Endothelial cell of umbilical vein (primary cell): ENCODE measurements at regions of chr2 and their contacts with region 1.

Region 1: GRCh38 chr2:240913810-240914644 is 7.9 kb downstream of the CROCC2 start:
- DNase-seq: peak; percentile 78
- H3K4me3 ChIP-seq: no peak overlapping the region
- H3K27ac ChIP-seq: peak overlapping the region; percentile 24
- H3K4me1 ChIP-seq: peaks cover 15% of the 10 kb centered on the region
- H3K27me3 ChIP-seq: no peaks in the 10 kb centered on the region
- CTCF ChIP-seq: peak; percentile 95 to 96
- POLR2A ChIP-seq: no peak

Region 2: DNA sequence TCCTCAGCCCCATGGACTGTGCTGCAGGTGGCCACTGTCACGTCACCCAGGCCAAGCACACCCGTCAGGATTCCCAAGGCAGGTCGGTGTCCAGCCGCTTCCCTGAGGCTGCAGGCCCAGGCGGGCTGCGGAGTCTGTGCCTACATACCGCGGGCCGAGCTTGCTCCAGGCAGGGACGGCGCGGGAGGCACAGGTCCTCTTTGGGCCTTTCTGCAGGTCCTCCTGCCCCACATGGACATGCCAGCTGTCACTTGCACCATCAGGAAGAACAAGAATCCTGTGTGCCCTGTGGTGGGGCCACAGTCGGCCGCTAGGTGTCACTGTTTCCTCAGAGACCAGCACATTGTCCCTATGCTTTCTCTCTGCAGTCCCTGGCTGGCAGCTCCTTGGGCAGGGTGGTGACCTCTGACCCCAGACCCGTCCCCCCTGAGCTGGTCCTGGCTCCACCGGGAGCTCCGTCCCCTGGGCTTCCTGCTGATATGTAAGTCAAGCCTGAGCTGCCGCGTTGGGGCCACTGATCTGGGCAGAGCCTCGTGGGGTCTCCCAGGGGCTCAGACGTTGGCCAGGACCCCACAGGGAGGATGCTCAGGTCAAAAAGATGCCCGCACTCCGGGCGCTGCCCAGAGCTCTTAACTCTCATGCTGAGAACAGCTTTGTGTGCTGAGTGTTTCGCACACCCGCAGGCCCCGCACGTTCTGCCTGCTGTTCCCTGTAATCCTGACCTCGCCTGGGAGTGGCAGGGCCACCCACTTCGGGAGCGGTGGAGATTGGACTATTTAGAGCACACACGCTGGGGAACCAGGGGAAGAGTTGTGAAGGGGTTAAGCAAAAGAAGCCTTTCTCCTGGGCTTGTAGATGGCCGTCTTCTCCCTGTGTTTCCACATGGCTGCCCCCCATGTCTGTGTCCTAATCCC is 62.7 kb before region 1 on chr2:
- CTCF ChIA-PET with region 1: interaction called, 11 read pairs
- POLR2A ChIA-PET with region 1: no interaction called
- dilution Hi-C with region 1: no loop called
- intact Hi-C with region 1: loop called (anchors 1 kb)
- DNase-seq: peak; percentile 78
- H3K4me3 ChIP-seq: no peak overlapping the region
- H3K27ac ChIP-seq: no peak overlapping the region
- H3K4me1 ChIP-seq: no peaks in the 10 kb centered on the region
- H3K27me3 ChIP-seq: no peaks in the 10 kb centered on the region
- CTCF ChIP-seq: peak; percentile 92 to 95
- POLR2A ChIP-seq: no peak

Region 3: DNA sequence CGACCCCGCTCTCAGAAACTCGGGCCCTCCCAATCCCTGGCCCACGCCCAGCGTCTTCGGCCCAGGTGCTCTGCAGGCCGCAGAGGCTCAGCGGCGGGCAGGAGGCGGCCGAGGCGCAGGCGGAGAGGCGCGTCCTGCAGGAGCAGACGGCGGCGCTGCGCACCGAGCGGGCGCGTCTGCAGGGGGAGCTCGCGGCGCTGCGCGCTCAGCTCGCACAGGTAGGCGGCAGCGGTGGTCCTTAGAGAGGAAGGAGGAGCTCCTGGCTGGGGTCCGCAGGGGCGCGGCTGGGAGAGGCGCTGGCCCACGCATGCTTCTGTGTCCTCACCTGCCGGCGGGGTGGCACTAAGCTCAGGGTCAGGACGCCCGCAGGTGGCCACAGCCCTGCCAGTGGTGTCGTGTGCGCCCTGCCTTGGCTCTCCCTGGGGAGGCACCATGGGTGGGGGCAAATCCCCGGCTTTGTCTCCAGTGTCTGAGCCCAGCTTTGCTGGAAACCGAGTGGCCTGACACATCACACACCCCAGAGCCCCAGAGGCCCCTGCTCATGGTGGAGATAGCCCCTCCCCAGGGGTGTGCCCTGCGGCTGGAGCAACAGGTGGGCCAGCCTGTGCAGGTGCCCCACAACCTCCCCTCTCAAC is 69.5 kb after region 1 on chr2:
- CTCF ChIA-PET with region 1: interaction called, 32 read pairs
- POLR2A ChIA-PET with region 1: no interaction called
- dilution Hi-C with region 1: no loop called
- intact Hi-C with region 1: loop called (anchors 1 kb)
- DNase-seq: peak; percentile 49
- H3K4me3 ChIP-seq: no peak overlapping the region
- H3K27ac ChIP-seq: no peak overlapping the region
- H3K4me1 ChIP-seq: peaks cover 14% of the 10 kb centered on the region
- H3K27me3 ChIP-seq: peaks cover 7 to 8% of the 10 kb centered on the region in 2 experiments
- CTCF ChIP-seq: peak; percentile 50 to 80
- POLR2A ChIP-seq: no peak

Region 4: DNA sequence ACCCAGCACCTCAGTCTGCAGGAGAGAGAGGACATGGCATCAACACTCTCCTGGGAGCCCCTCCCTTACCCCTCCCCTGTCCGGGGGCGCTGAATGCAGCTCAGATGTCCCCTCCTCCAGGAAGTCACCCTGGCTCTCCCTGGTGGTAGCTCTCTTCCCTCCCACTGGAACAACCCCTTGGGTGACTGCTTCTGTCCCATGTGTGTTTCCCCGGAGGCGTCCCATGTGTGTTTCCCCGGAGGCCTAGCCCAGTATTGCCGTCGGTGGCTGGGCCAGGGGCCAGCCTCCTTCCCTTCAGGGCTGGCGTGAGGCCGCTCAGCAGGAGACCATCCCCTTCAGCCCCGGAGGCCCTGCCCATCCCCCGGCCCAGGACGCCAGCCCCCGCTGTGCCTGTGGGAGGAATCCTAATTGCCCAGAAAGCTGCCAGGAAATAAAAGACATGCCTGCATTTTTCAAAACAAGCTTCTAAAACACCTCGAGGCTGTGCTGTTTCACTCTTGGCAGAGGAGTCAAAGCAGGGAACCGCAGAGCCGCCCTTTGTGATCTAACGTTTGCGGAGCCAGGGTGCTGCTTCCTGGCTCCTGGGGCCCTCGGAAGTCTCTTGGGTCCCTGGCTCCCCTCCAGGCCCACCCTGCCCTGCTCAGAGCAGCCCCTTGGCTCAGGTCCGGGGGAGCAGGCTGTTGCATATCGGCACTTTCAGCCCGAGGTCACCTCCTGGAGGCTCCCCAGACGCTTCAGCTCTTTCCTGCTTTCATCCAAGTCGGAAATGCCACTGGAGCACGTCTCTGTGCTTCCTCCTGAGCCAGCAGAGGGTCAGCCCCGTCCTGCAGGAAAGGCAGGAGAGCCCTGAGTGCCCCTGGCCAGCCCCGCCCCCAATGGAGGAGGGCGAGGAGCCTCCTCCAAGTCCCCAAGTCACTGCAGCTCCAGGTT is 95.8 kb after region 1 on chr2:
- CTCF ChIA-PET with region 1: interaction called, 25 read pairs
- POLR2A ChIA-PET with region 1: no interaction called
- dilution Hi-C with region 1: no loop called
- intact Hi-C with region 1: no loop called
- DNase-seq: peak; percentile 77
- H3K4me3 ChIP-seq: peak overlapping the region in 1 of 3 experiments; percentile 3
- H3K27ac ChIP-seq: peak overlapping the region; percentile 58
- H3K4me1 ChIP-seq: peaks cover 22% of the 10 kb centered on the region
- H3K27me3 ChIP-seq: no peaks in the 10 kb centered on the region
- CTCF ChIP-seq: no peak
- POLR2A ChIP-seq: peak; percentile 58

Region 5: GRCh38 chr2:241081643-241082340 is 167.8 kb after region 1 on chr2:
- CTCF ChIA-PET with region 1: interaction called, 21 read pairs
- POLR2A ChIA-PET with region 1: no interaction called
- dilution Hi-C with region 1: no loop called
- intact Hi-C with region 1: loop called (anchors 10 kb)
- DNase-seq: no peak
- H3K4me3 ChIP-seq: no peak overlapping the region
- H3K27ac ChIP-seq: no peak overlapping the region
- H3K4me1 ChIP-seq: no peaks in the 10 kb centered on the region
- H3K27me3 ChIP-seq: no peaks in the 10 kb centered on the region
- CTCF ChIP-seq: no peak
- POLR2A ChIP-seq: no peak

Region 6: DNA sequence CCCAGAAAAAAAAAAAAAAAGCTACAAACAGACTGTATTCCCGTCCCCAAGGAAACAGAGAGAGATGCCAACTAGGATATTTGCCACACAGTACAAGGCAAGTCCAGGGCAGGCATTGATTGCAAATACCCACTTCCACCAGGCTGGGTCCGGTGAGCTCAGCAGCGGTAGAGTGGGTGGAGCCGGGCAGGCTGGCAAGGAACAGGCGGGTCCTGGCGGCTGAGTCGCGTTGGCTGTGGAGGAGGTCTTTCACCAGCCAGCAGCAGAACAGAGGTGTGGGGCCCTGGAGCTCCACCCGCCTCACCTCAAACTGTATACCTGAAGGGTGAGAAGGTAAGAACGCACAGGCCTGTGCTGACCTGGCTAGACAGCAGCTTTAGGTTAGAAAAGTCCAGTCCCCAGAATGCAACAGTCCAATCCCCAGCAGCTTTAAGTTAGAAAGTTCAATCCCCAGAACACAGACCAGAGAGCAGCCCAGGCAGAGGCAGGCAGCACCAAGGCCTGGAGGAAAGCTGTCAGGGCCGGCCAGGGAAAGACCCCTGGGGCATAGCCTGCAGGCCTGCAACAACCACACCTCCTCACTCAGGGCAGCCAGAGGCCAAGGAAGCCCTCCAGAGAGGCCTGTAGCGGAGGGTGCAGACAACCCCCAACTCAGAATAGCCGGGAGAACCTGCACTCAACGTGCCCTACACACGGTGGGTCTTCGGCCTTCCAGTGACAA is 209.9 kb after region 1 on chr2:
- CTCF ChIA-PET with region 1: no interaction called
- POLR2A ChIA-PET with region 1: no interaction called
- dilution Hi-C with region 1: no loop called
- intact Hi-C with region 1: no loop called
- DNase-seq: no peak
- H3K4me3 ChIP-seq: no peak overlapping the region
- H3K27ac ChIP-seq: no peak overlapping the region
- H3K4me1 ChIP-seq: no peaks in the 10 kb centered on the region
- H3K27me3 ChIP-seq: no peaks in the 10 kb centered on the region
- CTCF ChIP-seq: no peak
- POLR2A ChIP-seq: no peak

Region 7: DNA sequence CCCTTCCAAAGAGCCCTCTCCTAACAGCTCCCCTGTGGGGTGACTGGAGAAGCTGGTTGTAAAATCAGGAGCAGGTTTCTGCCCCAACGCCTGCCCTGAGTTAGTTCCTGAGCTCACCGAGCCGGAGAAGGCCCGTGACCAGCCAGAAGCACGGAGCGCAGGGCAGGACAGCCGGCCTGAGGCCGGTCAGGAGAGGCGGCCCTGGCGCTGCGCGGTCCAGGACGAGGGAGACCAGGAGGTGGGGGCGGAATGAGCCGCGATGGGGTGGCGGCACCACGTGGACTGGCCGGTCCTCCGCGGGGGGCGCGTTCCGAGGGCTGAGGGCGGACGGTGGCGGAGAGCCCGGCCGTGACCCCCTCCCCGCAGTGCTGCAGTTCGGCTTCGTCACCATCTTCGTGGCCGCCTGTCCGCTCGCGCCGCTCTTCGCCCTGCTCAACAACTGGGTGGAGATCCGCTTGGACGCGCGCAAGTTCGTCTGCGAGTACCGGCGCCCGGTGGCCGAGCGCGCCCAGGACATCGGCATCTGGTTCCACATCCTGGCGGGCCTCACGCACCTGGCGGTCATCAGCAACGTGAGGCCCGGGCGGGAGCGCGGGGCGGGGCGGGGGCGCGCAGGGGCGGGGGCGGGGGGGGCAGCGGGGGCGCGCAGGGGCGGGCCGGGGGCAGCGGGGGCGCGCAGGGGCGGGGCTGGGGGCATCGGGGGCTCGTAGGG is 303.4 kb after region 1 on chr2:
- CTCF ChIA-PET with region 1: interaction called, 4 read pairs
- POLR2A ChIA-PET with region 1: no interaction called
- dilution Hi-C with region 1: no loop called
- intact Hi-C with region 1: loop called (anchors 2 kb)
- DNase-seq: peak; percentile 63
- H3K4me3 ChIP-seq: peak overlapping the region in 2 of 3 experiments; percentile 16 to 40
- H3K27ac ChIP-seq: no peak overlapping the region
- H3K4me1 ChIP-seq: peaks cover 5% of the 10 kb centered on the region
- H3K27me3 ChIP-seq: no peaks in the 10 kb centered on the region
- CTCF ChIP-seq: no peak
- POLR2A ChIP-seq: no peak